ENCODE measurements at regions of chr1 and their contacts with region 1.

Region 1: GRCh38 chr1:156338180-156338973 is at the starts of genes CCT3 and TSACC:
- DNase-seq: peak; percentile 99
- H3K4me3 Mint-ChIP-seq: peak within 1 kb of the TSS; percentile 97
- H3K27ac Mint-ChIP-seq: peak within 1 kb of the TSS; percentile 93
- H3K4me1 Mint-ChIP-seq: peaks cover 32% of the 10 kb centered on the region
- H3K27me3 Mint-ChIP-seq: no peaks in the 10 kb centered on the region
- total RNA-seq, gene CCT3: 332 to 349 TPM
- total RNA-seq, gene TSACC: 0.57 TPM in 1 of 2 experiments, not detected in the other

Region 2: GRCh38 chr1:155970531-155971167 is 367.7 kb before region 1 on chr1:
- CTCF ChIA-PET with region 1: no interaction called
- intact Hi-C with region 1: loop called (anchors 2 kb)
- DNase-seq: peak; percentile 69
- H3K4me3 Mint-ChIP-seq: peak overlapping the region; percentile 60
- H3K27ac Mint-ChIP-seq: peak overlapping the region; percentile 96
- H3K4me1 Mint-ChIP-seq: peaks cover 92% of the 10 kb centered on the region
- H3K27me3 Mint-ChIP-seq: no peaks in the 10 kb centered on the region

Region 3: DNA sequence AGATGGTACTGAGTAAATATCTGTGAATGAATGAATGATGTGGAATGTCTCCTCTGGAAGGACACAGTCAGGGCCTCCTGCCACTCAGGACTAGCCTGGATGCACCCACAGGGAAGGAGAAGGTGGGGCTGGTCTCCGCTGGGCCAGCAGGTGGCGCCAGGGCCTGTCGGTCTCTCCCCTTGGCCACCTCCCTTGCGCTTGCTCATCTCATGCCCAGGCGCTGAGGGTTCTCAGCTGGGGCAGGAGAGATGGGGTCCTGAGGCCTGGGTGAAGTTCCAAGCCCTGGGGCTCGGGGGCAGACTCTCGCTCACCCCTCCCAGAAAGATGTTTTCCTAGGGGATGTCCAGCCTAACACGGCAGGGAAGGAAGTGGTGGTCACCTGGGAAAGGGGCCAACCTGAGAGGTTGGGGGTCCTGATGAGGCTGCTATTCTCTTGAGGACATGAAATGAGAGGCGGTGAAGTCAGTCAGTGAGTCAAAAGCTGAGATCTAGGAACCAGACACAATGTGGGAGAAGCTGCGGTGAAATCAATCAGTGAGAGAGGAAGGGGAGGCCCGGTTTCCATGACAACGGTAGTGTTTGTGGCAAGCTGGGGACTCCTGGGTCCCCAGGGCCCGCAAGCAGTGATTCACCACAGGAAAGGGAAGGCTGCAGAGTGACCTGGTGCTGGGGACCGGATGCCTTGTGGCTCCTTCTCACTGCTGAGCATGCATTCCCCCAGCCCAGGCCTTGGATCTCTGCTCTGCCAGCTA is 241.6 kb before region 1 on chr1:
- CTCF ChIA-PET with region 1: interaction called, 3 read pairs
- intact Hi-C with region 1: loop called (anchors 1 kb)
- DNase-seq: peak; percentile 98
- H3K4me3 Mint-ChIP-seq: peak overlapping the region; percentile 40
- H3K27ac Mint-ChIP-seq: peak overlapping the region; percentile 99
- H3K4me1 Mint-ChIP-seq: peaks cover 49% of the 10 kb centered on the region
- H3K27me3 Mint-ChIP-seq: peaks cover 11% of the 10 kb centered on the region

Region 4: GRCh38 chr1:156282479-156283222 is 55.7 kb before region 1 on chr1 and contains the start of gene SMG5:
- CTCF ChIA-PET with region 1: interaction called, 3 read pairs
- intact Hi-C with region 1: loop called (anchors 1 kb)
- DNase-seq: peak; percentile 99
- H3K4me3 Mint-ChIP-seq: peak within 1 kb of the TSS; percentile 99
- H3K27ac Mint-ChIP-seq: peak within 1 kb of the TSS; percentile 92
- H3K4me1 Mint-ChIP-seq: peaks cover 27% of the 10 kb centered on the region
- H3K27me3 Mint-ChIP-seq: no peaks in the 10 kb centered on the region
- total RNA-seq, gene SMG5: 77.1 to 83.4 TPM

Region 5: DNA sequence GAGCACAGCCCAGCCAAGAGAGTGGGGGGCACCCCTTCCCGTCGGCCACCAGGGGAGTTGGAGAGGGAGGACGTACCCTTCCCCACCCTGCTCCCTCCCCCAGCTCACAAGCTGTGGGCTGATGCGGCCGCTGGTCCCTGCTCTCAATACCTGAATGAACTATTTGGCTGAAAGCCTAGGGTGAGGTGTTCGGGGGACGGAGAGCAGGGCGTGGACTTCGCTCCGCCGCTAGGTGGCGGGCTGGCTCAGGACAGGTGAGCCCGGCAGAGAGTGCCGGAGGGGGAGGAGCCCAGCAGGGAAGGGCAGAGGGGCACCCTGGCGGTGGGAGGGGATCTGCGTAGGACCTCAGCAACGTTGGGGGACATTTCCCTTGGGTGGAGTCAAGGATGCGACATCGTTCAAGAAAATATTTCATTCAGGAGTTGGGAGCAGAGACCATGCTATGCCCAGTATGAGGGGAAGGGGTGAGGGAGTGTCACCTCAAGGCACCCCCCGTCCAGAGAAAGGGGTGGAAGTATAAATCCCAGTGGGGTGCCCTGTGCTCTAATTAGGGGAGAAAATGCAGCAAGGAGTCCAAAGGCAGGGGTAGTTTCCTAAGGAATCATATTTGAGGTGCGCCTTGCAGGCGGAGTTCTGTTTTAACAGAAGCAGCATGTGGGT is 18.6 kb after region 1 on chr1:
- CTCF ChIA-PET with region 1: interaction called, 6 read pairs
- intact Hi-C with region 1: loop called (anchors 1 kb)
- DNase-seq: peak; percentile 66
- H3K4me3 Mint-ChIP-seq: no peak overlapping the region
- H3K27ac Mint-ChIP-seq: no peak overlapping the region
- H3K4me1 Mint-ChIP-seq: peaks cover 15% of the 10 kb centered on the region
- H3K27me3 Mint-ChIP-seq: peaks cover 21% of the 10 kb centered on the region

Region 6: DNA sequence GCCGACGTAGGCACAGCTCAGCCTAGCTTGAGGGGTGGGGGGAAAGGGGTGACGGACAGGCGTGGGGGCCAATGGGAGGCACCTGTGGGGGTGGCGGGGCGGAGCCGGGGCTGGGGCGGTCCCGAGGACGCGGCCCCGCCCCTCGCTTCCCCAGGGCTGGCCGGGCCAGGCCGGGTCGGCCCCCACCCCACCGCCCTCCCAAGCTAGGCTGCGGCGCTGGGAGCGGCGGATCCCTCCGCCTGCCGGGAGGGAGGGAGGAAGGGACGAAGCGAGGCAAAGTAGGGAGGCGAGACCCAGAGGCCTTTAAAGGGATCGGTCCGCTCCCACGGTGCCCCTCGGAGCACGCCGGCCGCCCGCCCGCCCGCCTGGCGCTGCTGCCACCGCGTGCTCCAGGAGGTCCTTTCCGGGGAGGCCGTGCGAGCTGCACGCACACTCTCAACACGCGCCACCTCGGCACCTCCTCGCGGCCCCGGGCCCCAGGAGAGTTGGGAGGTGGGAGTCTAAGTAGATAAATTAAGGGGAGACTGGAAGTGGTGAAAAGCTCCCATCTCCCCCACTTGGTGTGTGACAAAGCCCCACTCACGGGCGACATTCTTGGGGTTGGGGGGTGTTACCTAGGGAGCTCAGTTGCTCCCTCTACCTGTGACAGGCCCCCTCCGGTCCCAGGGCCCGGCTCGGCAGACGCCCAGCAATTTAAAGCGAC is 162.6 kb after region 1 on chr1:
- CTCF ChIA-PET with region 1: no interaction called
- intact Hi-C with region 1: loop called (anchors 1 kb)
- DNase-seq: peak; percentile 93
- H3K4me3 Mint-ChIP-seq: peak overlapping the region; percentile 89
- H3K27ac Mint-ChIP-seq: peak overlapping the region; percentile 97
- H3K4me1 Mint-ChIP-seq: peaks cover 75% of the 10 kb centered on the region
- H3K27me3 Mint-ChIP-seq: no peaks in the 10 kb centered on the region

Region 7: GRCh38 chr1:156920233-156921052 is 582.1 kb after region 1 on chr1 and contains the start of gene LRRC71:
- CTCF ChIA-PET with region 1: no interaction called
- intact Hi-C with region 1: no loop called
- DNase-seq: peak; percentile 70
- H3K4me3 Mint-ChIP-seq: no peak within 1 kb of the TSS
- H3K27ac Mint-ChIP-seq: no peak within 1 kb of the TSS
- H3K4me1 Mint-ChIP-seq: peaks cover 6% of the 10 kb centered on the region
- H3K27me3 Mint-ChIP-seq: peaks cover 70% of the 10 kb centered on the region
- total RNA-seq, gene LRRC71: not detected